Activated CD4-positive, alpha-beta memory T cell treated with anti-CD3 and anti-CD28 coated beads for 36 hours (primary cell): ENCODE measurements at regions of chr5 and their contacts with region 1.

Region 1: GRCh38 chr5:33936004-33936380 is 194 bp upstream of the RXFP3 start:
- DNase-seq: peak; percentile 61
- H3K4me3 Mint-ChIP-seq: no peak overlapping the region
- H3K27ac Mint-ChIP-seq: no peak overlapping the region
- H3K4me1 Mint-ChIP-seq: peaks cover 2% of the 10 kb centered on the region
- H3K27me3 Mint-ChIP-seq: peaks cover 48% of the 10 kb centered on the region

Region 2: DNA sequence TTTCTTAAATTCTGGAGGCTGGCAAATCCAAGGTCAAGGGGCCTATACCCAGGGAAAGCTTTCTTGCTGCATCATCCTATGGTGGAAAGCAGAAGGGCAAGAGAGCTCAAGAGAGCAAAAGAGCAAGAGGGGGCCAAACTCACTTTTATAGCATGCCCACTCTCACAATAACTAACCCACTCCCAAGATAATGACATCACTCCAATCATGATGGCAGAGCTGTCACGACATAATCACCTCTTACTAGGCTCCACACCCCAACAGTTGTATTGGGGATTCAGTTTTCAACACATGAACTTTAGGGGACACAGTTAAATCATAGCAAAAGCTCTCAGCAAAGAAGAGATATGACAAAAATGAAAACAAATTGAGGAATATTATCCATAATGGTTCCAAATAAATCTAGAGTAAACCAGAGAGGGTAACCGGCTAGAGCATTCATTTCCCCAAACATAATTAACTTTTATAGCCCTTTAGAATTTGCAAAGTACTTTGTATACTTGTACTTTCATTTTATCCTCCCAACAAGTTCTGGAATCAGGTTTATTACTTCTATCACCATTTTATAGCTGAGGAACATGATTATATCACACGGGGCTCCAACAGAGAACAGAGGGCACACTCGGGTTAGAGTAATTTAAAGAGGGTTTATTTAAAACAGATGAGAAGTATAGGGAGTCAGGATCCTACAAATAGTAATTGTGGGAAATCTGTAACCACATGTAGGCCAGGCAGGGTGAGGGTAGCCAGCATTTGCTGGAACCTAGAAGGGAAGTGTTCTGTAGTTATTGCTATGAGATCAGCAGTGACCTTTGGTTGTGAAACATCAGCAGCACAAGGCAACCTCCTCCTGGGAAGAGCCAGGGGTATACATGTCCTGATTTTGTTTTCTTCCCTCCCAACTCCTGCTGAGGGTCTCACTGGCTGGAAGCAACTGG is 502.4 kb before region 1 on chr5:
- CTCF ChIA-PET with region 1: interaction called, 44 read pairs
- POLR2A ChIA-PET with region 1: no interaction called
- intact Hi-C with region 1: loop called (anchors 1 kb)
- DNase-seq: no peak
- H3K4me3 Mint-ChIP-seq: no peak overlapping the region
- H3K27ac Mint-ChIP-seq: no peak overlapping the region
- H3K4me1 Mint-ChIP-seq: peaks cover 5% of the 10 kb centered on the region
- H3K27me3 Mint-ChIP-seq: peaks cover 4% of the 10 kb centered on the region

Region 3: GRCh38 chr5:33565324-33565723 is 370.7 kb before region 1 on chr5:
- CTCF ChIA-PET with region 1: no interaction called
- POLR2A ChIA-PET with region 1: no interaction called
- intact Hi-C with region 1: no loop called
- DNase-seq: no peak
- H3K4me3 Mint-ChIP-seq: no peak overlapping the region
- H3K27ac Mint-ChIP-seq: no peak overlapping the region
- H3K4me1 Mint-ChIP-seq: no peaks in the 10 kb centered on the region
- H3K27me3 Mint-ChIP-seq: peaks cover 2% of the 10 kb centered on the region

Region 4: DNA sequence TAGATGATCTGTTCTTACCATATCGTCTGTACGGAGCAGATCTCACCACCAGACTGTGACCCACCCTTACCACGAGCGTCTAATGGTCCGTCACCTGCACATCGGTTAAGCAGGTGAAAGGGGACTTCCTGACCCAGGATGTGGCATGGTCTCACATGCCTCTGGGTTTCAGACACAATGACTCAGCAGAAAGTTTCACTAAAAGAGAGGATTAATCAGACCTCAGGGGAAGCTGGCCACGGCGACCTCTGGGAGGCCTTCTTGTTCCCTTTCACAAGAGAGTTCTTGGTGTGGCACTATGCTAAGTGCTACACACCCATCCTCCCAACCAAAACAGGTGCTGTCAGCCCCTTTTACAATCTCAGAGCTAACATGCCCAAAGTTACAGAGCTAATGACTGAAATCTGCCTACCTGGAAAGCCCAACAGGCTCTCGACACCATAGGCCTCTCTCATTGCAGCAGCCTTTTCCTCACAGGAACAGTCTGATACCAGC is 85.8 kb before region 1 on chr5:
- CTCF ChIA-PET with region 1: no interaction called
- POLR2A ChIA-PET with region 1: no interaction called
- intact Hi-C with region 1: loop called (anchors 5 kb)
- DNase-seq: peak; percentile 73
- H3K4me3 Mint-ChIP-seq: no peak overlapping the region
- H3K27ac Mint-ChIP-seq: no peak overlapping the region
- H3K4me1 Mint-ChIP-seq: peaks cover 10% of the 10 kb centered on the region
- H3K27me3 Mint-ChIP-seq: peaks cover 2% of the 10 kb centered on the region

Region 5: DNA sequence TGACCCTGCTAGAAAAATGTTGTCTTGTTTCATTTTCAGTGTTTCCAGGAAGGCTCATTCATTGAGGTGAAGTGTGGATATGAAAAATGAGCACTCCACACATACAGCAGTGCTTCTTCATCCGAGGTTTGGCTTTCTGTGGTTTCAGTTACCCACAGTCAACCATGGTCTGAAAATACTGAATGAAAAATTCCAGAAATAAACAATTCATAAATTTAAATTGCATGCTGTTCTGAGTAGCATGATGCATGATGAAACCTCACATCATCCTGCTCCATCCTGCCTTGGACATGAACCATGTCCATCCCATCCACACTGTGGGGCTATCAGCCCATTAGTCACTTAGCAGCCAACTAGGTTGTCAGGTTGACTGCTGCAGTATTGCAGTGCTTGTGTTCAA is 58.9 kb after region 1 on chr5:
- CTCF ChIA-PET with region 1: no interaction called
- POLR2A ChIA-PET with region 1: no interaction called
- intact Hi-C with region 1: no loop called
- DNase-seq: peak; percentile 30
- H3K4me3 Mint-ChIP-seq: no peak overlapping the region
- H3K27ac Mint-ChIP-seq: no peak overlapping the region
- H3K4me1 Mint-ChIP-seq: peaks cover 12% of the 10 kb centered on the region
- H3K27me3 Mint-ChIP-seq: no peaks in the 10 kb centered on the region